ENCODE measurements at regions of chr11 and their contacts with region 1.

Region 1: GRCh38 chr11:123301696-123302400 is 106.8 kb upstream of the CLMP start:
- DNase-seq: peak; percentile 82
- ATAC-seq: peak; percentile 89

Region 2: DNA sequence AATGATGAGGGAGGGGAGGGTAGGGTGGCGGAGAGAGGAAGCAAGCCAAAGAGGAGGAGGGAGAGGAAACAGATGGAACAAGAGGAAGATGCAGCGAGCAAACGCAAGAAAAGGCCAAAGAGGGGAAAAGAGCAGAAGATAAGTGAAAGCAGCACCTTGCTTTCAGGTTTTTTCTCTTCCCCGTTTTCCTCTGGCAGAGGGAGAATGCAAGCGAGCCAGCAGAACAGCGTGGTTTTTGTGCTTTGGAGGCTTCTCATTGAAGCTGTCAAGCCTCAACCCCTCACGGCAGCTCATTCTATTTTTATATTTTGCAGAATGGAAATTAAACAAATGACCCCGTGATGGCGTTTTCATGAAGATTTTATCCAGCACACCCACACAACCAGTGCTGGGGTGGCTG is 61.1 kb after region 1 on chr11:
- intact Hi-C with region 1: loop called (anchors 10 kb)
- DNase-seq: no peak
- ATAC-seq: peak; percentile 64

Region 3: DNA sequence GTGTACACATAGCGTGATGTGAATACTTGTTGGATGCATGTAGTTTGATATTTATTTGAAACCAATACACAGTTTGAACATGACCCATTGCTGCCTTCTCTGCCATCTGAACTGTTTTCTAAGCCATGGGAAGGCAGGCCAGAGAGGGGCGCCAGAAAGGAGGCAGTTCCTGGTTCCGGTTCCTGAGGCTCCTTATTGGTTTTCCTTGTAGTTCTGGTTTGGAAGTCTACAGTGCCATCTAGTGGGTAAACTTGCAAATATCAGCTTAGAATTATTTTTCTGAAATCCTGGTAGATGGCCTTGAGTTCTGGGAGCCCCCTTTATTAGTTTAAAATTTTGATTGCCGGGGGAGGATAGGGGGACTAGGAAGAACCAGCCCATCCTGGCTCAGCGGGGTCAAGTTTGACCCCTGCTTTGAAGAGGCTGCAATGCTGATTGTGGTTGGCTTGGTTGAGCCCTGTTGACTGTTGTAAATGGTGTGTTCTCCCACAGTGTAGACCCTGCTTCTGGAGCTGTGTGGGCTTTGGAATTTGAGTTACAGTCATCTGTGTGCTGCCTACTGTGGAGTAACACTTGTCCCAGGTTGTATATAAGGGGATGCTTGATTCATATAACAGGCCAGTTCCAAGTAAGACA is 176.6 kb after region 1 on chr11:
- intact Hi-C with region 1: loop called (anchors 5 kb)
- DNase-seq: peak; percentile 49
- ATAC-seq: peak; percentile 63